Activated B cell treated with CpG ODN at 0.5 μM for 24 hours (primary cell): ENCODE measurements at regions of chr1 and their contacts with region 1.

Region 1: DNA sequence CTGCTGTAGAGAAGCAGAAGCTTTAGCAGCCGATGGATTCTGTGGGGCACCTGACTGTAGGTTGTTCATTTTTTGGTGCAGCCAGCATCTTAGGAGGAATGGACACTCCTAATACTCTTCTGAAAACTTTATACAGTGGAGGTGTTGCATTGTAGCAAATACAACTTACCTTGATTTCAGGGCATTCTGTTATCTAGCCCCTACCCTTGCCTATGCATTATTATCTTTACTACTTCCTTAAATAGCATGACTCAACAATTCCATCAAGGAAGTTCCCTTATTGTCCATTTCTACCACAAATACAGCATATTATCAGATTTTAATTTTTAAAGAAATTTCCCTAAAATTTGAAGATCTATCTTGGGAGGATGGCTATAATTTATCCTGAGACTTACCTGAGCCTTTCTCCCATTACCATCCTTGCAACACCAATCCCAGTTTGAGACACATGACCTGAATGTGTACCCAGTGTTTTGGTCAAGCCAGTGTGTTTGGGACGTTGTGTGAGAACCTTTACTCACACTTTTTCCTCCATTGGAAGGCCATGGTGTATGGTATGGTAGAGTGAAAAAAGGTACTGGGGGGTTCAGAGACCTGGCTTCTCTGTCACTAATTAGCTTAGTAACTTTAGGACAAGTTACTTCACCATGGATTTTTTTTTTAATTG is 9.2 kb downstream of the POU2F1 start:
- DNase-seq: no peak
- ATAC-seq: peak; percentile 31
- H3K4me3 Mint-ChIP-seq: no peak overlapping the region
- H3K27ac Mint-ChIP-seq: no peak overlapping the region
- H3K4me1 Mint-ChIP-seq: peaks cover 67% of the 10 kb centered on the region
- H3K27me3 Mint-ChIP-seq: no peaks in the 10 kb centered on the region
- CTCF ChIP-seq: no peak

Region 2: GRCh38 chr1:167185974-167186657 is 43.7 kb before region 1 on chr1:
- CTCF ChIA-PET with region 1: no interaction called
- POLR2A ChIA-PET with region 1: no interaction called
- intact Hi-C with region 1: no loop called
- DNase-seq: no peak
- ATAC-seq: no peak
- H3K4me3 Mint-ChIP-seq: no peak overlapping the region
- H3K27ac Mint-ChIP-seq: no peak overlapping the region
- H3K4me1 Mint-ChIP-seq: no peaks in the 10 kb centered on the region
- H3K27me3 Mint-ChIP-seq: peaks cover 10% of the 10 kb centered on the region
- CTCF ChIP-seq: no peak

Region 3: DNA sequence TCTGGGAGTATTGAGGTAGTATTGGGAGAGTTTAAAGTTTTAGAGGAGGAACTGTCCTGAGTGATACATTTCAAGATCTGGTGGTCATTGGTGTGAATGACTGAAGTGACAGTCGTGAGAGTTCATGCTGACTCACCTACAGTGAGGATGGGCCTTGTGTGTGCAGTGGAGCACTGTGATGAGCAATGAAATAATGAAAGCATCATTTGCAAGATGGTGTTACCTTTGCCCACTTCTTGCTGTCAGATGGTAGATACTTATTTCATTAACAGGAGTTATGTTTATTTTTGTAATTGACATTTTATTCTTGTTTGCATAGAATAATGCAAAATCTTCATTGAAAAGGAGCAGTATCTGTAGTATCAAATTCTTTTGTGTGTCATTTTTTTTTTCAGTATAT is 19.9 kb after region 1 on chr1:
- CTCF ChIA-PET with region 1: interaction called, 3 read pairs
- POLR2A ChIA-PET with region 1: no interaction called
- intact Hi-C with region 1: loop called (anchors 2 kb)
- DNase-seq: no peak
- ATAC-seq: peak; percentile 61
- H3K4me3 Mint-ChIP-seq: no peak overlapping the region
- H3K27ac Mint-ChIP-seq: no peak overlapping the region
- H3K4me1 Mint-ChIP-seq: peaks cover 46% of the 10 kb centered on the region
- H3K27me3 Mint-ChIP-seq: no peaks in the 10 kb centered on the region
- CTCF ChIP-seq: no peak

Region 4: GRCh38 chr1:167360120-167360519 is 130.3 kb after region 1 on chr1:
- CTCF ChIA-PET with region 1: no interaction called
- POLR2A ChIA-PET with region 1: no interaction called
- intact Hi-C with region 1: no loop called
- DNase-seq: no peak
- ATAC-seq: no peak
- H3K4me3 Mint-ChIP-seq: no peak overlapping the region
- H3K27ac Mint-ChIP-seq: no peak overlapping the region
- H3K4me1 Mint-ChIP-seq: peaks cover 36% of the 10 kb centered on the region
- H3K27me3 Mint-ChIP-seq: no peaks in the 10 kb centered on the region
- CTCF ChIP-seq: no peak